K562 (cell line): ENCODE measurements at regions of chr14 and their contacts with region 1.

Region 1: GRCh38 chr14:20632682-20633428 is 8.6 kb downstream of the OR6S1 start:
- DNase-seq: peak; percentile 70 to 91 (median 82)
- ATAC-seq: peak; percentile 85
- H3K4me3 ChIP-seq: peak overlapping the region; percentile 40
- H3K27ac ChIP-seq: no peak overlapping the region
- H3K4me1 ChIP-seq: peaks cover 5 to 7% of the 10 kb centered on the region in 2 experiments; a peak in 4 of 5 replicates
- H3K27me3 ChIP-seq: peaks cover 4 to 5% of the 10 kb centered on the region in 2 experiments; a peak in 1 of 5 replicates
- CTCF ChIP-seq: no peak
- EP300 ChIP-seq: no peak
- POLR2A ChIP-seq: no peak
- RAD21 ChIP-seq: no peak

Region 2: GRCh38 chr14:20530771-20531571 is 101.9 kb before region 1 on chr14:
- CTCF ChIA-PET with region 1: no interaction called
- POLR2A ChIA-PET with region 1: no interaction called
- in situ Hi-C with region 1: no loop called
- intact Hi-C with region 1: no loop called
- DNase-seq: peak; percentile 13 to 75 (median 26)
- ATAC-seq: peak; percentile 82
- H3K4me3 ChIP-seq: no peak overlapping the region
- H3K27ac ChIP-seq: no peak overlapping the region
- H3K4me1 ChIP-seq: no peaks in the 10 kb centered on the region; a peak in 2 of 5 replicates
- H3K27me3 ChIP-seq: no peaks in the 10 kb centered on the region
- CTCF ChIP-seq: peak; percentile 50 to 66 (median 59); a peak in 5 of 6 replicates
- EP300 ChIP-seq: no peak
- POLR2A ChIP-seq: no peak
- RAD21 ChIP-seq: peak; percentile 60 to 72

Region 3: DNA sequence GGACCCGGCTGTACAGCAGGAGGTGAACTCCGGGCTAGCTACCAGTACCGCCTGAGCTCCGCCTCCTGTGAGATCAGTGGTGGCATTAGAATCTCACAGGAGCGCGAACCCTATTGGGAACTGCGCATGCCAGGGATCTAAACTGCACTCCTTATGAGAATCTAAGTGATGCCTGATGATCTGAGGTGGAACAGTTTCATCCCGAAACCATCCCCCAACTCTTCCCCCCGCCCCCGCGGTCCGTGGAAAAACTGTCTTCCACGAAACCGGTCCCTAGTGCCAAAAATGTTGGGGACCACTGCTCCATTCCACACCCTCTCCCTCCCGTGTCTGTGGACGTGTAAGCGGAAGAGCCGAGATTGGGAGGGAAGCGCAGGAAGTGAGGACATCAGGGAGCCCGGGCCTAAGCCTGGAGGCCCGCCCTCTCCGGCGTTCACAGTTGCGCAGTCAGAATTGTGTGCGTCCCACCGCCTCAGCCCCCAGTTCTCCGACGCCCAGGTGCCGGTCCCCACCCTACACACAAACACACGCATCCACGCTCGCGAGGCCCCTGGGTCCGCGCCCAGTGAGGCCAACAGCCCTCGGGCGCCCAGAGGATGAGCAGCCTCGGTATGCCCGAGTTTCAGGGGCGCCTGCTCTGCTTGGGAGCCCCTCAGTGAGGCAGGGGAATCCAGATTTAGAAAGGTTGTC is 49.7 kb after region 1 on chr14:
- CTCF ChIA-PET with region 1: no interaction called
- POLR2A ChIA-PET with region 1: interaction called, 6 read pairs
- in situ Hi-C with region 1: loop called (anchors 5 kb)
- intact Hi-C with region 1: loop called (anchors 2 kb)
- DNase-seq: peak; percentile 37 to 83 (median 54)
- ATAC-seq: peak; percentile 83
- H3K4me3 ChIP-seq: peak overlapping the region; percentile 75
- H3K27ac ChIP-seq: peak overlapping the region; percentile 62; the same call in 2 of the 3 replicates
- H3K4me1 ChIP-seq: peaks cover 10 to 13% of the 10 kb centered on the region in 2 experiments; a peak in 3 of 5 replicates
- H3K27me3 ChIP-seq: no peaks in the 10 kb centered on the region
- CTCF ChIP-seq: no peak
- EP300 ChIP-seq: no peak
- POLR2A ChIP-seq: peak; percentile 50; the same call in 1 of the 2 replicates
- RAD21 ChIP-seq: no peak

Region 4: GRCh38 chr14:21038441-21039422 is 405.9 kb after region 1 on chr14:
- CTCF ChIA-PET with region 1: no interaction called
- POLR2A ChIA-PET with region 1: no interaction called
- in situ Hi-C with region 1: no loop called
- intact Hi-C with region 1: no loop called
- DNase-seq: no peak
- ATAC-seq: peak; percentile 31
- H3K4me3 ChIP-seq: no peak overlapping the region
- H3K27ac ChIP-seq: no peak overlapping the region
- H3K4me1 ChIP-seq: peaks cover 0 to 15% of the 10 kb centered on the region in 2 experiments; a peak in 4 of 5 replicates
- H3K27me3 ChIP-seq: no peaks in the 10 kb centered on the region
- CTCF ChIP-seq: no peak
- EP300 ChIP-seq: no peak
- POLR2A ChIP-seq: no peak
- RAD21 ChIP-seq: no peak